ENCODE measurements at regions of chr4 and their contacts with region 1.

Region 1: DNA sequence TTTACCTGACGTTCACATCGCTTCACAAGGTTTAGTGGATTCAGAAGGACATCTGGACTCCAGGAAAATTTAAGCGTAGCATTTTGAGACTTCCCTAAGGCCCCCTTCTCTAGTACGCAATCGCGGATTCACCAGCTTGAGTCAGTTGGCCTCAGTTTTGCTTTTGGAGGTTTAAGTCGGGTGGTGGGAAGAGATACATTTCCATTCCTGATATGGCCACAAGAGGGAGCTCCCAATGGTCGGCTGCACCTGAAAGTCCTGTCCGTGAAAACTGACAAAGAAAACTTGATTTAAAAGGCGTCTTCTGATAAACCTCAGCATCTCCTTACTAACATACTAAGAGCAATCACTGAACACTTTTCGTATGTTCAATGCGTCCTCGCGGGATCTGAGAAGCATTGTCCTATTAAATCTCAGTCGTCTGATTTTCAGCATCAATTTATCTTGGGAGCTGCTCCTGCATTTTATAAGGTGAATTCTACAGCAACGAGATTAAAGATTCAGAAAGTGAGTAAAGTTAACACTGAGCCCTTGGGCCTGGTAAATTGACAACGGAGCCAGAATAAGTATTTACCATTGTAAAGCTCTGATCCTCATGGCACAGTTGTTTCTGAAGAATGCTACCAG is 50.6 kb downstream of the LGI2 start:
- DNase-seq: peak; percentile 53
- H3K4me3 ChIP-seq: peak overlapping the region in 1 of 2 experiments; percentile 38; a peak in 1 of 4 replicates
- H3K27ac ChIP-seq: no peak overlapping the region
- H3K4me1 ChIP-seq: no peaks in the 10 kb centered on the region; a peak in 1 of 4 replicates
- H3K27me3 ChIP-seq: no peaks in the 10 kb centered on the region
- CTCF ChIP-seq: peak; percentile 88
- EP300 ChIP-seq: no peak
- RAD21 ChIP-seq: peak; percentile 68

Region 2: DNA sequence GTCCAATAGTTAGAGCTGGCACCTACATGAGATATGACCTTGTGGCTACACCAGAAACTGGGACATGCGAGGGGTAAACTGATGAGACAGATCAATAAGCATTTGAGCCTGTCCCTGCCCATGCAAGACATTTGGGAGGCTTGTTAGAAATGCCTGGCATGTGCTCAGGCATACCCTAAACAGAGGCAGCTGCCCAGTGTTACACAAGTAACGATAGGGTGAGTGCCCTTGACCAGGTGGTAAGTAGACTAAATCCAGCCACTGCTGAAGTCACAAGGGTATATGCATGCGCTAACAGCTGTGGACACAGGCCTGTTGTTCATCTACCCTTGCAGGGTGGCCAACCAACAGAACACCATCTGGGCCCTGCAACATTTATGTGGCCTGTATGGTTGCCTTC is 11.2 kb before region 1 on chr4:
- CTCF ChIA-PET with region 1: interaction called, 11 read pairs
- POLR2A ChIA-PET with region 1: no interaction called
- DNase-seq: no peak
- H3K4me3 ChIP-seq: no peak overlapping the region
- H3K27ac ChIP-seq: no peak overlapping the region
- H3K4me1 ChIP-seq: no peaks in the 10 kb centered on the region
- H3K27me3 ChIP-seq: no peaks in the 10 kb centered on the region
- CTCF ChIP-seq: no peak
- EP300 ChIP-seq: no peak
- RAD21 ChIP-seq: no peak

Region 3: GRCh38 chr4:24991015-24991414 is 10.8 kb after region 1 on chr4:
- CTCF ChIA-PET with region 1: interaction called, 27 read pairs
- POLR2A ChIA-PET with region 1: no interaction called
- DNase-seq: no peak
- H3K4me3 ChIP-seq: no peak overlapping the region
- H3K27ac ChIP-seq: no peak overlapping the region
- H3K4me1 ChIP-seq: no peaks in the 10 kb centered on the region
- H3K27me3 ChIP-seq: no peaks in the 10 kb centered on the region; the same call in none of the 2 replicates
- CTCF ChIP-seq: no peak
- EP300 ChIP-seq: no peak
- RAD21 ChIP-seq: no peak

Region 4: GRCh38 chr4:25113915-25114904 is 134.0 kb after region 1 on chr4:
- CTCF ChIA-PET with region 1: no interaction called
- POLR2A ChIA-PET with region 1: no interaction called
- DNase-seq: no peak
- H3K4me3 ChIP-seq: no peak overlapping the region
- H3K27ac ChIP-seq: no peak overlapping the region
- H3K4me1 ChIP-seq: no peaks in the 10 kb centered on the region
- H3K27me3 ChIP-seq: no peaks in the 10 kb centered on the region; the same call in 1 of the 2 replicates
- CTCF ChIP-seq: no peak
- EP300 ChIP-seq: no peak
- RAD21 ChIP-seq: no peak

Region 5: GRCh38 chr4:25129917-25130316 is 149.7 kb after region 1 on chr4:
- CTCF ChIA-PET with region 1: interaction called, 14 read pairs
- POLR2A ChIA-PET with region 1: no interaction called
- DNase-seq: no peak
- H3K4me3 ChIP-seq: no peak overlapping the region
- H3K27ac ChIP-seq: no peak overlapping the region
- H3K4me1 ChIP-seq: no peaks in the 10 kb centered on the region
- H3K27me3 ChIP-seq: no peaks in the 10 kb centered on the region
- CTCF ChIP-seq: no peak
- EP300 ChIP-seq: no peak
- RAD21 ChIP-seq: no peak

Region 6: DNA sequence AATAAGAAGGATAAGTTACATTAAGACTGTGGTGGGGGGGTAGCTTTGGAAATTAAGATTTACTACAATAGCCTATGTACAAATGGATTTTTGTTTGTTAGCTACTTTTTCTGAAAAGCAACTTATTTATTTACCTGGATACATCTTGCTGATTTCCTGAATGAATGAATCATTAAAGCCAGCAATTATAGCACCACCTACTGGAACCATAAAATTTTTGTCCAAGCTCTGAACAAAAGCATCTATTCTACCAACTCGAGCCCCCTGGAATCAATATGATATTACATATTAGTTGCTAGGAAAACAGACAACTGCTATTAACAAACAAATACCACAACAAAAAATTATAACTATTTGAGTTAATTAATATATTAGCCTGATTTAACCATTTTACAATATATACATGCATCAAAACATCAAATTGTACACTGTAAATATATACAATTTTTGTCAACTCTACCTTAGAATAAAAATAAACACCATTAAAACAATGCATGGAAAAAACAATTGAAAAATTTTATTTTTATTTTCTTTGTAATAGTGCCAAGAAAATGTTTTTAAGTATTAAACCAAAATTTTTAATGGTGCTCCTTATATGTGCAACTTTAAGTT is 164.8 kb after region 1 on chr4:
- CTCF ChIA-PET with region 1: interaction called, 50 read pairs
- POLR2A ChIA-PET with region 1: no interaction called
- DNase-seq: peak; percentile 43
- H3K4me3 ChIP-seq: no peak overlapping the region
- H3K27ac ChIP-seq: no peak overlapping the region
- H3K4me1 ChIP-seq: no peaks in the 10 kb centered on the region
- H3K27me3 ChIP-seq: no peaks in the 10 kb centered on the region
- CTCF ChIP-seq: peak; percentile 83
- EP300 ChIP-seq: no peak
- RAD21 ChIP-seq: peak; percentile 70

Measured in SK-N-SH (cell line).